Activated CD8-positive, alpha-beta T cell treated with anti-CD3 and anti-CD28 coated beads, Interleukin-2, amount 10 ng/mL, durations not matched to agents 7 days and 5 days (primary cell): ENCODE measurements at regions of chr3 and their contacts with region 1.

Region 1: DNA sequence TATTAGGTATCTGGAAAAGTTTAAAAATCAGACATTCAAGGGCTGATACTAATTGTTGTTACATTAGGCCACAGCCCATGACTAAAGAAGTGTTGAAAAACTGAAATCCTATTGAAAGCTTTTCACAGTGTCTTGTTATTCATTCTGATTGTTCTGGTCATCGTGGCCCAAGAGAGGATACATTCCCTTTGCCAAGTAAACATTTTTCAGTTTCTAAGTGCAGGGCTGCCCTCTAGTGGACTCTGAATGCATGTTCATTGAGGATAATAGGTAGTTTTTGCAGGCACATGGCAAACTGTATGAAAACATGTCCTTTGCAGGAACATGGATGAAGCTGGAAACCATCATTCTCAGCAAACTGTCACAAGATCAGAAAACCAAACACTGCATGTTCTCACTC is 181.1 kb downstream of the MYRIP start:
- DNase-seq: peak; percentile 35
- ATAC-seq: no peak
- H3K4me3 Mint-ChIP-seq: no peak overlapping the region
- H3K27ac Mint-ChIP-seq: no peak overlapping the region
- H3K4me1 Mint-ChIP-seq: no peaks in the 10 kb centered on the region
- H3K27me3 Mint-ChIP-seq: peaks cover 2% of the 10 kb centered on the region

Region 2: DNA sequence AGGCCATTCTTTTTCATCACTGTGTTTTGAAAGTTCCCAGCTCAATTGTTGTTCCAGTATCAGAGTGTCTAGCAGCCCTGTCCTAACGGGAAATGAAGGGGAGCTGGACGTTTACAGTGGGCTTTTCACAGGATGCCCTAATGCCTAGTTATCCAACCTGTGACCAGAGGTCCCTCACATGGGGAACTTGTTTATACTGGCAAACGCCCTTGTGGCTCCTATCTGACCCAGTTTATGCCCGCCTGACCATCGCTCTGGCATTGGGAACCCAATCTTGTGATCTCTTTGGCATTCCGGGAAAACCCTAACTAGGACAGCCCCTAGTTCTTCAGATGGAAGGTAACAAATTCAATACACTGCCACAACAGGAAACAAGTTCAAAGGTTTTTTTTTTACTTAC is 195.7 kb before region 1 on chr3:
- CTCF ChIA-PET with region 1: no interaction called
- POLR2A ChIA-PET with region 1: interaction called, 10 read pairs
- DNase-seq: no peak
- ATAC-seq: no peak
- H3K4me3 Mint-ChIP-seq: no peak overlapping the region
- H3K27ac Mint-ChIP-seq: no peak overlapping the region
- H3K4me1 Mint-ChIP-seq: no peaks in the 10 kb centered on the region
- H3K27me3 Mint-ChIP-seq: peaks cover 4% of the 10 kb centered on the region